Head of caudate nucleus (tissue), 42 donors: ENCODE measurements at regions of chr20 and their contacts with region 1.

Region 1: GRCh38 chr20:59042796-59043660 is 442 bp upstream of the PRELID3B start:
- DNase-seq: peak; percentile 69 to 96 (median 91)

Region 2: GRCh38 chr20:58511364-58511763 is 531.7 kb before region 1 on chr20:
- intact Hi-C with region 1: no loop called
- DNase-seq: peak in 1 of 42 donors; percentile 10

Region 3: GRCh38 chr20:58778760-58779159 is 264.3 kb before region 1 on chr20:
- intact Hi-C with region 1: no loop called
- DNase-seq: peak in 1 of 42 donors; percentile 10

Region 4: GRCh38 chr20:58890518-58891085 is 152.4 kb before region 1 on chr20:
- intact Hi-C with region 1: loop called (anchors 5 kb)
- DNase-seq: peak in 39 of 42 donors; percentile 33 to 81 (median 63)